CD8-positive, alpha-beta T cell (primary cell): ENCODE measurements at regions of chr19 and their contacts with region 1.

Region 1: GRCh38 chr19:1470203-1471009 is 8.6 kb downstream of the C19orf25 start:
- DNase-seq: peak; percentile 38 to 83 (median 71)
- ATAC-seq: peak; percentile 76
- H3K4me3 ChIP-seq: peak overlapping the region; percentile 51 to 58
- H3K4me3 Mint-ChIP-seq: peak overlapping the region; percentile 74
- H3K27ac ChIP-seq: no peak overlapping the region
- H3K27ac Mint-ChIP-seq: no peak overlapping the region
- H3K4me1 ChIP-seq: peaks cover 54% of the 10 kb centered on the region
- H3K4me1 Mint-ChIP-seq: peaks cover 14% of the 10 kb centered on the region
- H3K27me3 ChIP-seq: peaks cover 21 to 22% of the 10 kb centered on the region in 2 experiments
- H3K27me3 Mint-ChIP-seq: peaks cover 2% of the 10 kb centered on the region
- CTCF ChIP-seq: no peak

Region 2: DNA sequence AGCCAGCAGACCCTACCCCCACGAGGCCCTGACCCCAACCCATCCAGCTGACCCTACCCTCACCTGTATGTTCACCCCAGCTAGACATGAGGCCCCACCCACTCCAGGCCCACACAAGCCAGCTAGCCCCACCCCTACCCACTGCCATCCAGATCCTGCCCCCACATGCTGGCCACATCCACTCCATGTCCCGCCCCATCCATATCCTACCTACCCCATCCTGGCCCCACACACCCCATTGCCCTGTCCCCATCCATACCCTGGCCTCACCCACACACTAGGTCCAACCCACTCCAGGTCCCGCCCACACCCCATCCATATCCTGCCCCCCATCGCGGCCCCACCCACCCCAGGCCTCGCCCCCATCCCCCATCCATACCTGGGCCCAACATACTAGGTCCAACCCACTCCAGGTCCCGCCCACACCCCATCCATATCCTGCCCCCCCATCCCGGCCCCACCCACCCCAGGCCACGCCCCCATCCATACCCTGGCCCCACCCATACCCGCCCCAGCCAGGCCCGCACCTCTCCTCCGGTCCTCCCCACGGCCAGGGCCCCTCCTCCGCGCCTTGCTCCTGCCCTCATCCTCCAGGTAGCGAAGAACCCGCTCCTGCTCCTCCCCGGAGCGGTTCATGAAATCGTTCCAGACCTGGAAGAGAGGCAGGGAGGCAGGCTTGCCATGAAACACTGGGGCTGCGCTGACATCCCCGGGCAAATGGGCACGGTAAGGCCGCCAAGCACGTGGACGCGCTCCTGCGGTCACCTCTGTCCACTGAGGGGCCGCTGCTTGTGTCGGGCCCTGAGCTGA is 569.9 kb before region 1 on chr19:
- CTCF ChIA-PET with region 1: no interaction called
- POLR2A ChIA-PET with region 1: no interaction called
- intact Hi-C with region 1: no loop called
- DNase-seq: peak in 4 of 9 experiments; percentile 36 to 66 (median 59)
- ATAC-seq: peak; percentile 72
- H3K4me3 ChIP-seq: no peak overlapping the region
- H3K4me3 Mint-ChIP-seq: no peak overlapping the region
- H3K27ac ChIP-seq: no peak overlapping the region
- H3K27ac Mint-ChIP-seq: no peak overlapping the region
- H3K4me1 ChIP-seq: peaks cover 29% of the 10 kb centered on the region
- H3K4me1 Mint-ChIP-seq: peaks cover 24% of the 10 kb centered on the region
- H3K27me3 ChIP-seq: no peaks in the 10 kb centered on the region
- H3K27me3 Mint-ChIP-seq: no peaks in the 10 kb centered on the region
- CTCF ChIP-seq: no peak

Region 3: DNA sequence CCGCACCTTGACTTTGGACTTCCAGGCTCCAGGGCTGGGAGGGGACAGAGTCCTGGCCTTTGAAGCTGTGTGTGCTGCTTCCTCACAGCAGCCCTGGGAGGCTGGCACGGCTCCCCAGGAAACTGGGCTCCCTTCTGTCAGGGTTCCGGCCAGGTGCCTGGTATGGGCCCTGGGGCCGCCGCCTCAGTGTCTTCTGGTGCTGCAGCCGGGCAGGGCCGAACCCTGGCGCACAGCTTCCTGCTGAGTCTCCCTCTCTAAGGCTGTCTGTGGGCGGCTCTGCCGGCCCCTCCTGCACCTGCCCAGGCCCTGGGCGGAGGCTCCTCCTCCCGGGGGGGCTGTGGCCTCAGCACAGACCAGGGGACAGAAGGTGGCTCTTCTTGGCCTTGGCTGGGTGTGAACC is 334.2 kb before region 1 on chr19:
- CTCF ChIA-PET with region 1: no interaction called
- POLR2A ChIA-PET with region 1: no interaction called
- intact Hi-C with region 1: no loop called
- DNase-seq: no peak
- ATAC-seq: no peak
- H3K4me3 ChIP-seq: no peak overlapping the region
- H3K4me3 Mint-ChIP-seq: no peak overlapping the region
- H3K27ac ChIP-seq: no peak overlapping the region
- H3K27ac Mint-ChIP-seq: no peak overlapping the region
- H3K4me1 ChIP-seq: peaks cover 23% of the 10 kb centered on the region
- H3K4me1 Mint-ChIP-seq: peaks cover 11% of the 10 kb centered on the region
- H3K27me3 ChIP-seq: no peaks in the 10 kb centered on the region
- H3K27me3 Mint-ChIP-seq: no peaks in the 10 kb centered on the region
- CTCF ChIP-seq: no peak

Region 4: DNA sequence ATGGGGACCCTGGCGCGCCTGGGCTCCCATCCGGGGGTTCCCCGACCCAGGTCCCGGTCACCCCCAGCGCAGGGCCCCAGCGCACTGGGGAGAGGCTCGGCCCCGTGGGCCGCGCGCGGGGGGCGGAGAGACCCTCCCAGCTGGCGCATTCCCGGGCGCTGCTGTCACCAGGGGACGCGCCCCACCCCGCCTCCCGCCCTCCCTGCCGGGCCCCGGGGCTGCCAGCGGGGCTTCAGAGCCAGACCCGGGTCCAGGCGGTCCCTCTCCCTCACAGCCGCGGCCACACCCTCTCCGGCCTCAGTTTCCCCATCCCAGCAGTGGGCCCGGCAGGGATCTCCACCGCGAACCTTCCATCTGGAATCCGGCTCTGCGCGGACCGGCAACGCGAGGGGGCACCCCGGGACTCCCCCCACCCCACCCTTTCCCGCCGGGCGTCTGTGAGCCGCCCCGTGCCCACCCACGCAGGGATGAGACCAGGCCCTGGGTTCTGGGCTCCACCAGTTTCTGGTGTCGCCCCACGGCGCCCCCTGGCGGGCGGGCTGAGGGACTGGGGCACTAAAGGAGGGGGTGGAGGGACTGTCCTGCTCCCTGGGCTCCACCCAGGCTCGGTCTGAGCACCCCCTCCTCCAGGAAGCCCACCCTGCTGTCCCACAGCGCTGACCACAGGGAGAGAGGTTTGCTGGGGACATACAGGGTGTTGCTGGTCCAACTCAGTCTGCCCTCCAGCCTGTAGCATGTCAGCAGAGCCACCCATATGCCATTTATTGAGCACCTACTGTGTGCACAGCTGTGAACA is 43.3 kb after region 1 on chr19:
- CTCF ChIA-PET with region 1: interaction called, 5 read pairs
- POLR2A ChIA-PET with region 1: no interaction called
- intact Hi-C with region 1: loop called in 1 of 2 experiments (anchors 2 kb)
- DNase-seq: peak in 8 of 9 experiments; percentile 45 to 79 (median 76)
- ATAC-seq: peak; percentile 67
- H3K4me3 ChIP-seq: no peak overlapping the region
- H3K4me3 Mint-ChIP-seq: no peak overlapping the region
- H3K27ac ChIP-seq: no peak overlapping the region
- H3K27ac Mint-ChIP-seq: no peak overlapping the region
- H3K4me1 ChIP-seq: peaks cover 12% of the 10 kb centered on the region
- H3K4me1 Mint-ChIP-seq: peaks cover 11% of the 10 kb centered on the region
- H3K27me3 ChIP-seq: peaks cover 5 to 12% of the 10 kb centered on the region in 2 experiments
- H3K27me3 Mint-ChIP-seq: peaks cover 10% of the 10 kb centered on the region
- CTCF ChIP-seq: peak; percentile 66